PC-9 (cell line): ENCODE measurements at regions of chr12 and their contacts with region 1.

Region 1: GRCh38 chr12:14934511-14934910 is 3.8 kb downstream of the ERP27 start:
- DNase-seq: no peak
- H3K4me3 ChIP-seq: no peak overlapping the region
- H3K27ac ChIP-seq: peak overlapping the region; percentile 97
- H3K4me1 ChIP-seq: peaks cover 64% of the 10 kb centered on the region
- H3K27me3 ChIP-seq: no peaks in the 10 kb centered on the region
- CTCF ChIP-seq: no peak

Region 2: DNA sequence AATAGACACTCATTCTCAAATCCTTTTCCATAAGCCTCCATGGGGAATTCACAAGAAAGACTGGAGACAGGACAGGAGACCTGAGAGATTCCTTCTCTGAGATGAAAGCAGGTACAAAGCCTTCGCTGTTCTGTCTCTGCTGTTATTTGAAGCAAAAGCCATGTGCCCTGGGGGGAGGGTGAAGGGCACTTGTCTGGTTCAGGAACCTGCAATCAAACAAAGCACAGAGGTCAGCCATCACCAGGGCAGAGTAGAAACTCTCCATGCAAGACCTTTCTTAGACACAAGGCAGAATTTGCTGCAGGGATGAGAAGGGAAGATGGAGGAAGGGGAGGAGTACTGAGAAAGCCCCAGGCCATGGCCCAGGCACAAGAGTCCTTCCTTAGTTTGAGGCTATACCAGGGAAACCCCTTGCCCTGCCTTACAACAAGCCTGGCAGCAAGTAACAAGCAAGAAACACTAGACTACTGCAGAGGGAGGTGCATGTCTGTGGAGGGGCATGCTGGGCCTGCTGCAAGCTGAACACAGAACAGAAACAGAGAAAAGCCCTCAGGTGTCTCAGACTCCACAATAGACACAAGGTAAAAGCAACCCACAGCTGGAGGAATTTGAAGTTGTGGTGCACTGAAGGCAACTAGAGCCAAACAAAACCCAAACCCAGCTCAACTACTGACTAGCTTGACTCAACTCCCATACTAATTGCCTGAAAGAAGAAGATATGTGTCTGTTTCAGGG is 83.4 kb before region 1 on chr12:
- CTCF ChIA-PET with region 1: interaction called, 10 read pairs
- POLR2A ChIA-PET with region 1: no interaction called
- intact Hi-C with region 1: no loop called
- DNase-seq: no peak
- H3K4me3 ChIP-seq: no peak overlapping the region
- H3K27ac ChIP-seq: no peak overlapping the region
- H3K4me1 ChIP-seq: peaks cover 10% of the 10 kb centered on the region
- H3K27me3 ChIP-seq: no peaks in the 10 kb centered on the region
- CTCF ChIP-seq: no peak

Region 3: DNA sequence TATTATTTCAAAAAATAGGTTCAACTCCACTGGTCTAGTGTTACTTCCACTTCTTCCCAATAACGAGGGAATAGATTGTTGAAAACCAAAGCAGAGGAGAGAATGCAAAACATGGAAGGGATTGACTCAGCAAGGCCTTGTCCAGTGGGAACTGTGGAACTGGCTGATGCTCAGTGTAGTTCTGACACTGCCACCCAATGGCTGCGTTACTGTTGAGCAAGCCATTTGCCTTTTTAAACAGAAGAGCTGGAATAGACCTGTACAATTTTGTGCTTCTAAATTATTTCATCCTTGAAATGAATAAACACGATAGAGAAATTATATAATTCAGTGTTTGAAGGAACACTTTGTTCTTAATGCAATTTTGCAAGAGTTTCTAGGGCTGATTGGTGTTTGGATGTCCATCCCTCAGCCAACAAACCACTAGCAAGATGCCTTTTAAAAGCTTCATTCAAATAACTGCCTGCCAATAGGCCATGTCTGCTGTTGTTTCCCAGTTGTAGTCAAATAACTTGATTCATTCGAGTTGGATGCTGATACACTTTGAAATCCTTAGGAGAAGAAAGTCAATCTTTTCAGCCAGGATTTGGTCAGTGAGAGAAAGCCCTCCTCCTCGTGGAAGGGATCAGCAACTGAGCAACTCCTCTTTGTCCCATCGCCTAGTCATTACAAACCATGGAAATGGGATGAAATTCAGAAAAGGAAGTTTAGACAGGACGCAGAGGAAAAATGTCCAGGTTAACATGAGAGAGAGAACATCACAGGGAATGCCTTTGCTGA is 41.6 kb before region 1 on chr12:
- CTCF ChIA-PET with region 1: no interaction called
- POLR2A ChIA-PET with region 1: no interaction called
- intact Hi-C with region 1: no loop called
- DNase-seq: no peak
- H3K4me3 ChIP-seq: no peak overlapping the region
- H3K27ac ChIP-seq: no peak overlapping the region
- H3K4me1 ChIP-seq: 0 out of 2 replicates have a peak, but pooled peaks cover 5% of the 10 kb centered on the region
- H3K27me3 ChIP-seq: no peaks in the 10 kb centered on the region
- CTCF ChIP-seq: no peak

Region 4: GRCh38 chr12:16189849-16190248 is 1255.3 kb after region 1 on chr12:
- CTCF ChIA-PET with region 1: no interaction called
- POLR2A ChIA-PET with region 1: no interaction called
- intact Hi-C with region 1: no loop called
- DNase-seq: no peak
- H3K4me3 ChIP-seq: no peak overlapping the region
- H3K27ac ChIP-seq: no peak overlapping the region
- H3K4me1 ChIP-seq: no peaks in the 10 kb centered on the region
- H3K27me3 ChIP-seq: no peaks in the 10 kb centered on the region
- CTCF ChIP-seq: peak; percentile 56